HCT116 (cell line): ENCODE measurements at regions of chr16 and their contacts with region 1.

Region 1: GRCh38 chr16:27235055-27235937 is 32.0 kb downstream of the KDM8 start:
- DNase-seq: peak; percentile 37
- ATAC-seq: peak; percentile 81
- H3K4me3 ChIP-seq: no peak overlapping the region
- H3K27ac ChIP-seq: no peak overlapping the region; the same call in 1 of the 2 replicates
- H3K4me1 ChIP-seq: peaks cover 14 to 40% of the 10 kb centered on the region in 2 experiments; a peak in 3 of 4 replicates
- H3K27me3 ChIP-seq: no peaks in the 10 kb centered on the region
- CTCF ChIP-seq: peak; percentile 83 to 97 (median 91); a peak in 5 of 6 replicates
- POLR2A ChIP-seq: no peak
- RAD21 ChIP-seq: peak; percentile 85

Region 2: DNA sequence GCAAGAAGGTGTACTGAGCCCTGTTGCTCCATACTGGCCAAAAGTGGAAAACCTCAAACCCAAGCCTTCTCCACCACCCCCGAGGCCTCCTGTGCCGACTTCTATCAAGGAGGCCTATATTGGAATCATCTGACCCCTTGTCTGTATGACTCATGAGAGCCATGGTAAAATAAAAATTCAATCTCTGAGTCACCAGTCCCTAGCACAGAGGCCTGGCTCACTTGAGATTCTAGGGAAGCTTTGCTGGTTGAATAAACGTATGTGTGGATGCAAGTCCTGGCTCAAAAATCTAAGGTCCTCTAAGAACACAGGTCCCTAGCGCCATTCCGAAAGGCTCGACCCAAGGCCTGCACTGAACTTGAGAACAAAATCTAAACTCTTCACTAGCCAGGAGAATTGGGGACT is 18.2 kb after region 1 on chr16:
- CTCF ChIA-PET with region 1: interaction called, 10 read pairs
- POLR2A ChIA-PET with region 1: no interaction called
- RAD21 ChIA-PET with region 1: no interaction called
- intact Hi-C with region 1: no loop called
- DNase-seq: peak; percentile 65
- ATAC-seq: peak; percentile 99
- H3K4me3 ChIP-seq: peak overlapping the region in 1 of 2 experiments; percentile 34; a peak in 2 of 4 replicates
- H3K27ac ChIP-seq: peak overlapping the region; percentile 55; the same call in 1 of the 2 replicates
- H3K4me1 ChIP-seq: peaks cover 23 to 48% of the 10 kb centered on the region in 2 experiments
- H3K27me3 ChIP-seq: no peaks in the 10 kb centered on the region
- CTCF ChIP-seq: no peak
- POLR2A ChIP-seq: no peak
- RAD21 ChIP-seq: no peak

Region 3: DNA sequence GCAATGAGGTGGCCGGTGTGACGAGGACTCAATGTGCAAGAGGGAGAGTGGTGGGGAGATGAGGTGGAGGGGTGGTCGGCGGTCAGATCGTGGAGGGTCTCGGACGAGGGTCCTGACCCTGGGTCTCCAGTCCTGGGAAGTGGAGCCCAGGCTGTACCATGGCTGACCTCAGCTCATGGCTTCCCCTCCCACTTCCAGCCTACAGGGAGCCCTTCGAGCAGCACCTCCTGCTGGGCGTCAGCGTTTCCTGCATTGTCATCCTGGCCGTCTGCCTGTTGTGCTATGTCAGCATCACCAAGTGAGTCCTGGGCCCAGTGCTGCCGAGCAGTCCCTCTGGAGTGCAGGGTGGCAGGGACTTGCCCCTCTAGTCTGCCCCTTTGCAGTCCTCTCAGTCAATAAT is 120.3 kb after region 1 on chr16:
- CTCF ChIA-PET with region 1: interaction called, 14 read pairs
- POLR2A ChIA-PET with region 1: no interaction called
- RAD21 ChIA-PET with region 1: no interaction called
- intact Hi-C with region 1: no loop called
- DNase-seq: peak; percentile 19
- ATAC-seq: peak; percentile 89
- H3K4me3 ChIP-seq: no peak overlapping the region
- H3K27ac ChIP-seq: no peak overlapping the region
- H3K4me1 ChIP-seq: no peaks in the 10 kb centered on the region
- H3K27me3 ChIP-seq: no peaks in the 10 kb centered on the region
- CTCF ChIP-seq: peak; percentile 35 to 72 (median 67); a peak in 5 of 6 replicates
- POLR2A ChIP-seq: no peak
- RAD21 ChIP-seq: peak; percentile 52

Region 4: DNA sequence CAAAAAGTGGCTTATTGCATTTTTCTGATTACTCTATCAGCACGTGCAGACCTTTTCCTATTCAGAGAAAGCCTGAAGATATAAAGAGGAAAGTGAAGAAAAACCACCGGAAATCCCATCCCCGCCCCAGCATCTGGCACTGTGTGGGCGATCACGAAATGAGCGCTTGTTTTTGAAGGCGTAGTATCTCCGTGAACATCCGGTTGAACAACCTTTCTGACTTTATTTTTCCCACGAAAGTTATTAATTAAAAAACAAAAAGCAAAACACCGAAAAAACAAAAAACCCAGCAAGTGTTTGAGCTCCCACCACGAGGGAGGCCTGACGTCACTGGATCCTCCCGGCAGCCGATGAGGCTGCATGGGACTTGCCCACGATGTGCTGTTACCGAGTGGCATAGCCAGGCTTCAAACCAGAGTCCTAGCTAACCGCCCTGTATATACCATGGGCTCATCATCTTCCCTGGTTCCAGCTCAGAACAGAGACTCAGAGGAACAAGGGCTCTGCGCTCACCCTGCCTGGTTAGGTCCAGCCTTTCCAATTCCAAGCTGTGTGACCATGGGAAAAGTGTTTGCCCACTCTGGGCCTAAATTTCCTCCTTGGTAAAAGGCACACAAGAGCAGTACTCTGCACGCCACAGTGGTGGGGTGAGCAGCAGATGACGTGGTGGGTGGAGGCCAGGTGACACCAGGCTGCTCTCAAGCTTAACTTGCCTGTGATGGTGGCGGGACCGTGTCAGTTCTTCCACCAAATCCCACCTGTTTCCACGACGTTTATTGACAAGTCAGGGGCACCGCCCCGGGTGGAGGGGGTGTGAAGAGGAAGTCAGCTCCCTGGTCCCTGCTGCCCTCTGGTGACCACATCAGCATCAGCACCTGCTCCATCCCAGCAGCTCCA is 132.4 kb after region 1 on chr16:
- CTCF ChIA-PET with region 1: interaction called, 51 read pairs
- POLR2A ChIA-PET with region 1: no interaction called
- RAD21 ChIA-PET with region 1: interaction called, 6 to 13 read pairs
- intact Hi-C with region 1: loop called (anchors 1 kb)
- DNase-seq: peak; percentile 63
- ATAC-seq: peak; percentile 92
- H3K4me3 ChIP-seq: no peak overlapping the region
- H3K27ac ChIP-seq: no peak overlapping the region
- H3K4me1 ChIP-seq: peaks cover 2 to 37% of the 10 kb centered on the region in 2 experiments; a peak in 3 of 4 replicates
- H3K27me3 ChIP-seq: no peaks in the 10 kb centered on the region
- CTCF ChIP-seq: peak; percentile 74 to 82 (median 82)
- POLR2A ChIP-seq: no peak
- RAD21 ChIP-seq: peak; percentile 95

Region 5: GRCh38 chr16:27374804-27375425 is 139.6 kb after region 1 on chr16:
- CTCF ChIA-PET with region 1: interaction called, 14 read pairs
- POLR2A ChIA-PET with region 1: no interaction called
- RAD21 ChIA-PET with region 1: interaction called, 3 read pairs
- intact Hi-C with region 1: no loop called
- DNase-seq: peak; percentile 94
- ATAC-seq: peak; percentile 99
- H3K4me3 ChIP-seq: peak overlapping the region in 1 of 2 experiments; percentile 19; a peak in 2 of 4 replicates
- H3K27ac ChIP-seq: peak overlapping the region; percentile 40
- H3K4me1 ChIP-seq: peaks cover 6 to 16% of the 10 kb centered on the region in 2 experiments; a peak in 3 of 4 replicates
- H3K27me3 ChIP-seq: no peaks in the 10 kb centered on the region
- CTCF ChIP-seq: peak; percentile 43 to 79 (median 69); a peak in 5 of 6 replicates
- POLR2A ChIP-seq: peak; percentile 89
- RAD21 ChIP-seq: peak; percentile 59

Region 6: DNA sequence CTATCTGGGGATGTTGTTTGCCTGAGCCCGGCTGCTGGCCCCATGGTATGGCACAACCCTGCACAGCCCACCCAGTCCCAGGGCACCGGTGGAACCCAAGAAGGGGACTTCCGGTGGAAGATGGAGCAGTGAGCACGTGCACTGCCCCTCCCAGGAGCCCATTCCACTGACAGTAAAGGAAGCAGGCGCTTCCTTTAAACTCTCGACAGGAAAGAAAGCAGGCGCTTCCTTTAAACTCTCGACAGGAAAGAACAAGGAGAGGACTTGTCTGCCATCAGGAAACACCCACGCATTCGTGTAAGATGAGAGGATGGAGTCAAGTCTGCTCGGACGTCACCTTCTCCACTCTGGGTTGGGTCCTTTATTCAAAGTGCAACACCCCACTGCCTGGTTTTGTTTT is 220.4 kb after region 1 on chr16:
- CTCF ChIA-PET with region 1: no interaction called
- POLR2A ChIA-PET with region 1: no interaction called
- RAD21 ChIA-PET with region 1: no interaction called
- intact Hi-C with region 1: loop called (anchors 5 kb)
- DNase-seq: no peak
- ATAC-seq: no peak
- H3K4me3 ChIP-seq: no peak overlapping the region
- H3K27ac ChIP-seq: no peak overlapping the region
- H3K4me1 ChIP-seq: no peaks in the 10 kb centered on the region
- H3K27me3 ChIP-seq: no peaks in the 10 kb centered on the region
- CTCF ChIP-seq: no peak
- POLR2A ChIP-seq: no peak
- RAD21 ChIP-seq: no peak